B cell (primary cell): ENCODE measurements at regions of chr21 and their contacts with region 1.

Region 1: GRCh38 chr21:33360881-33361602 is 36.3 kb downstream of the IFNAR1 start:
- DNase-seq: peak; percentile 89
- ATAC-seq: peak; percentile 79
- H3K4me3 ChIP-seq: peak overlapping the region; percentile 21 to 50 (median 49)
- H3K4me3 Mint-ChIP-seq: peak overlapping the region; percentile 89
- H3K27ac ChIP-seq: peak overlapping the region; percentile 81 to 93
- H3K27ac Mint-ChIP-seq: peak overlapping the region; percentile 96
- H3K4me1 ChIP-seq: peaks cover 37 to 41% of the 10 kb centered on the region in 2 donors
- H3K4me1 Mint-ChIP-seq: peaks cover 44% of the 10 kb centered on the region
- H3K27me3 ChIP-seq: no peaks in the 10 kb centered on the region
- H3K27me3 Mint-ChIP-seq: no peaks in the 10 kb centered on the region
- CTCF ChIP-seq: peak; percentile 90

Region 2: GRCh38 chr21:33266050-33266788 is 94.8 kb before region 1 on chr21 and contains the start of gene IL10RB:
- CTCF ChIA-PET with region 1: interaction called, 20 read pairs
- POLR2A ChIA-PET with region 1: interaction called, 11 read pairs
- intact Hi-C with region 1: loop called (anchors 5 kb)
- DNase-seq: peak; percentile 87
- ATAC-seq: peak; percentile 77
- H3K4me3 ChIP-seq: peak within 1 kb of the TSS; percentile 71 to 94 (median 88)
- H3K4me3 Mint-ChIP-seq: peak within 1 kb of the TSS; percentile 98
- H3K27ac ChIP-seq: peak within 1 kb of the TSS; percentile 82 to 91
- H3K27ac Mint-ChIP-seq: peak within 1 kb of the TSS; percentile 95
- H3K4me1 ChIP-seq: peaks cover 35 to 56% of the 10 kb centered on the region in 2 donors
- H3K4me1 Mint-ChIP-seq: peaks cover 55% of the 10 kb centered on the region
- H3K27me3 ChIP-seq: no peaks in the 10 kb centered on the region
- H3K27me3 Mint-ChIP-seq: no peaks in the 10 kb centered on the region
- CTCF ChIP-seq: no peak
- total RNA-seq, gene IL10RB: 32.5 and 35.5 TPM in 2 replicates

Region 3: DNA sequence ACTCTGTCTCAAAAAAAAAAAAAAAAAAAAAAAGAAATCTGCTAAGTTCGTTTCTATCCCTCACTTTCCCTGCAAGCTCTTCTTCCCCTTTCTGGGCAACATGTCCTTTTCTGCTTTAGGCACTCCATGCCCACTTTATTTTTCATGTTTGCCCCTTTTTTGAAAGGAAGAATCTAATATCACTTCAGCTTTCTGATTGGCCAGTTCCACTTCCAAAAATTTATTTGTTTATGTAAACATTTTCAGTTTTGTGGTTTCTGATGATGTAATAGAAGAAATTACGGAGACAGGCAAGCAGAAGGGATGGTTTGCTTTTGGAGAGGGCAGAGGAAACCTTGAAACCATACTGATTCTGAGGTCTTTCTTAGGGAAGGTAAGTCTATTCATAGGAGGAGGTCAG is 21.1 kb before region 1 on chr21:
- CTCF ChIA-PET with region 1: interaction called, 20 read pairs
- POLR2A ChIA-PET with region 1: interaction called, 4 read pairs
- intact Hi-C with region 1: no loop called
- DNase-seq: peak; percentile 14
- ATAC-seq: no peak
- H3K4me3 ChIP-seq: no peak overlapping the region
- H3K4me3 Mint-ChIP-seq: peak overlapping the region; percentile 66
- H3K27ac ChIP-seq: peak overlapping the region; percentile 15 to 68
- H3K27ac Mint-ChIP-seq: peak overlapping the region; percentile 83
- H3K4me1 ChIP-seq: peaks cover 22 to 27% of the 10 kb centered on the region in 2 donors
- H3K4me1 Mint-ChIP-seq: peaks cover 37% of the 10 kb centered on the region
- H3K27me3 ChIP-seq: no peaks in the 10 kb centered on the region
- H3K27me3 Mint-ChIP-seq: no peaks in the 10 kb centered on the region
- CTCF ChIP-seq: no peak

Region 4: GRCh38 chr21:33386222-33386784 is 25.3 kb after region 1 on chr21:
- CTCF ChIA-PET with region 1: interaction called, 93 read pairs
- POLR2A ChIA-PET with region 1: interaction called, 36 read pairs
- intact Hi-C with region 1: loop called (anchors 1 kb)
- DNase-seq: no peak
- ATAC-seq: no peak
- H3K4me3 ChIP-seq: no peak overlapping the region
- H3K4me3 Mint-ChIP-seq: no peak overlapping the region
- H3K27ac ChIP-seq: peak overlapping the region in 1 of 2 donors; percentile 39
- H3K27ac Mint-ChIP-seq: peak overlapping the region; percentile 53
- H3K4me1 ChIP-seq: peaks cover 42 to 66% of the 10 kb centered on the region in 2 donors
- H3K4me1 Mint-ChIP-seq: peaks cover 63% of the 10 kb centered on the region
- H3K27me3 ChIP-seq: no peaks in the 10 kb centered on the region
- H3K27me3 Mint-ChIP-seq: no peaks in the 10 kb centered on the region
- CTCF ChIP-seq: no peak

Region 5: DNA sequence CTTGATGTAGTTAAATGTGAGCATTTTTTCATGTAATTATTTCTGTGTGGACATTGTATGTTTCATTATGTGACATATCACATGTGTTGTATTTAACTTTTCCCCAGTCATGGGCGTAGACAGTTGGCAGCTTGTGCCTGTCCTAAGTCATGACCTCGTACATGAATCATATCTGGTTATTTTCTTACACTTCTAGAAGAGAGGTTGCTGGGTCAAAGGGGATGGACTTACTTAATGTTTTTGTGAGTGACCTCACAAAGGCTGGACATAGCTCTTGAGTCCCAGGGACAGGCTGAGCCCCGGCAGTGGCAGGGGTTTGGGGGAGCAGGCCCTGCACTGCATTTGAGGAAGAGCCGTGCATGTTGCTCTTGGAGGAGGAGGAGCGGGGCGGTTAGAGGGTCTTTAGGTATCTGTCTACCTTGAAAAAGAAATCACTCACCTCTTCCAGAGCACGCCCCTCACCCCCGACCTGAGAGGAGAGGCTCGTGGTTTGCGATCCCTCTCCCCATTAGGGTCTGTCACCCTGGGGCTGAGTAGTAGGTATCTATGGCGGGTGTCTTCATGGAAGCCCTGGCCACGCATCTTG is 58.6 kb after region 1 on chr21:
- CTCF ChIA-PET with region 1: interaction called, 22 read pairs
- POLR2A ChIA-PET with region 1: no interaction called
- intact Hi-C with region 1: no loop called
- DNase-seq: no peak
- ATAC-seq: no peak
- H3K4me3 ChIP-seq: no peak overlapping the region
- H3K4me3 Mint-ChIP-seq: no peak overlapping the region
- H3K27ac ChIP-seq: peak overlapping the region in 1 of 2 donors; percentile 28
- H3K27ac Mint-ChIP-seq: peak overlapping the region; percentile 41
- H3K4me1 ChIP-seq: no peaks in the 10 kb centered on the region
- H3K4me1 Mint-ChIP-seq: peaks cover 12% of the 10 kb centered on the region
- H3K27me3 ChIP-seq: no peaks in the 10 kb centered on the region
- H3K27me3 Mint-ChIP-seq: no peaks in the 10 kb centered on the region
- CTCF ChIP-seq: no peak

Region 6: GRCh38 chr21:33505833-33506232 is 144.8 kb after region 1 on chr21:
- CTCF ChIA-PET with region 1: no interaction called
- POLR2A ChIA-PET with region 1: interaction called, 11 read pairs
- intact Hi-C with region 1: no loop called
- DNase-seq: no peak
- ATAC-seq: no peak
- H3K4me3 ChIP-seq: no peak overlapping the region
- H3K4me3 Mint-ChIP-seq: no peak overlapping the region
- H3K27ac ChIP-seq: no peak overlapping the region
- H3K27ac Mint-ChIP-seq: no peak overlapping the region
- H3K4me1 ChIP-seq: no peaks in the 10 kb centered on the region
- H3K4me1 Mint-ChIP-seq: no peaks in the 10 kb centered on the region
- H3K27me3 ChIP-seq: no peaks in the 10 kb centered on the region
- H3K27me3 Mint-ChIP-seq: no peaks in the 10 kb centered on the region
- CTCF ChIP-seq: no peak